Caco-2 (cell line): ENCODE measurements at regions of chr2 and their contacts with region 1.

Region 1: GRCh38 chr2:118003396-118003824 is 10.5 kb downstream of the CCDC93 start:
- DNase-seq: peak; percentile 45 to 79
- H3K4me3 ChIP-seq: no peak overlapping the region
- H3K4me3 Mint-ChIP-seq: no peak overlapping the region
- H3K27ac Mint-ChIP-seq: no peak overlapping the region
- H3K4me1 ChIP-seq: no peaks in the 10 kb centered on the region
- H3K4me1 Mint-ChIP-seq: no peaks in the 10 kb centered on the region
- H3K27me3 ChIP-seq: no peaks in the 10 kb centered on the region
- H3K27me3 Mint-ChIP-seq: no peaks in the 10 kb centered on the region
- CTCF ChIP-seq: peak; percentile 75 to 85

Region 2: GRCh38 chr2:117835990-117836760 is 167.2 kb before region 1 on chr2:
- CTCF ChIA-PET with region 1: interaction called, 4 read pairs
- POLR2A ChIA-PET with region 1: no interaction called
- intact Hi-C with region 1: loop called (anchors 1 kb)
- DNase-seq: peak in 1 of 2 experiments; percentile 54
- H3K4me3 ChIP-seq: no peak overlapping the region
- H3K4me3 Mint-ChIP-seq: no peak overlapping the region
- H3K27ac Mint-ChIP-seq: no peak overlapping the region
- H3K4me1 ChIP-seq: peaks cover under 1% of the 10 kb centered on the region; the same call in 1 of the 2 replicates
- H3K4me1 Mint-ChIP-seq: no peaks in the 10 kb centered on the region
- H3K27me3 ChIP-seq: no peaks in the 10 kb centered on the region
- H3K27me3 Mint-ChIP-seq: no peaks in the 10 kb centered on the region
- CTCF ChIP-seq: peak; percentile 23 to 65

Region 3: GRCh38 chr2:117968722-117969121 is 34.7 kb before region 1 on chr2:
- CTCF ChIA-PET with region 1: interaction called, 9 read pairs
- POLR2A ChIA-PET with region 1: no interaction called
- intact Hi-C with region 1: loop called (anchors 1 kb)
- DNase-seq: no peak
- H3K4me3 ChIP-seq: no peak overlapping the region
- H3K4me3 Mint-ChIP-seq: no peak overlapping the region
- H3K27ac Mint-ChIP-seq: no peak overlapping the region
- H3K4me1 ChIP-seq: peaks cover 6% of the 10 kb centered on the region
- H3K4me1 Mint-ChIP-seq: peaks cover 9% of the 10 kb centered on the region
- H3K27me3 ChIP-seq: no peaks in the 10 kb centered on the region
- H3K27me3 Mint-ChIP-seq: no peaks in the 10 kb centered on the region
- CTCF ChIP-seq: peak in 1 of 2 experiments; percentile 5

Region 4: DNA sequence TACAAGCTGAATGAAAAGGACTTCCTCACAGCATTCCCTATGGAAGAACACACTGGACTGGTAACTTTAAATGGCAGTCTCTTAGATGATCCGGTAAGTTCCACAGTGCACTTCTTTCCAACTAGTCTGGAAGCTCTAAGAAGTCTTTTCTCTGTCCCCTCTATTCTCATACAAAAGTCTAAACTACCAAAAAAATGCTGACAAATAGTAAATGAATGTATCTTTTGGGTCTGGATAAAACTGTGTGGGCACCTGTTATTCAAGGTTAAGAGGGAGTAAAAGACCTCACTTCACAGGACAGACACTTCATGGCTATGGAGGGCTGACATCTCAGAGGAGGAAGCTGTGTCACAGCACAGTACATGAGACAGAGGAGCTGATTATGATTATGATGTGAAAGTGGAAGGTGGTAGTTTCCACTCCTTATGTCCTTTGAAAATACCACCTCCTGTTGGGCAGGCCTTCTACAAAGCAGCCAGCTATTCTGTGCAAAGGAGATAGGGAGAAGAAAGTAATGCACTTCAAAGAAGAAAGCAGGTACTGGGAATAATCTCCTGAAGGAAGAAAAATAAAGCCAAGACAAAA is 13.5 kb before region 1 on chr2:
- CTCF ChIA-PET with region 1: interaction called, 11 read pairs
- POLR2A ChIA-PET with region 1: no interaction called
- intact Hi-C with region 1: no loop called
- DNase-seq: no peak
- H3K4me3 ChIP-seq: no peak overlapping the region
- H3K4me3 Mint-ChIP-seq: no peak overlapping the region
- H3K27ac Mint-ChIP-seq: no peak overlapping the region
- H3K4me1 ChIP-seq: no peaks in the 10 kb centered on the region
- H3K4me1 Mint-ChIP-seq: no peaks in the 10 kb centered on the region
- H3K27me3 ChIP-seq: no peaks in the 10 kb centered on the region
- H3K27me3 Mint-ChIP-seq: no peaks in the 10 kb centered on the region
- CTCF ChIP-seq: no peak